GM12878 (cell line): ENCODE measurements at regions of chr18 and their contacts with region 1.

Region 1: DNA sequence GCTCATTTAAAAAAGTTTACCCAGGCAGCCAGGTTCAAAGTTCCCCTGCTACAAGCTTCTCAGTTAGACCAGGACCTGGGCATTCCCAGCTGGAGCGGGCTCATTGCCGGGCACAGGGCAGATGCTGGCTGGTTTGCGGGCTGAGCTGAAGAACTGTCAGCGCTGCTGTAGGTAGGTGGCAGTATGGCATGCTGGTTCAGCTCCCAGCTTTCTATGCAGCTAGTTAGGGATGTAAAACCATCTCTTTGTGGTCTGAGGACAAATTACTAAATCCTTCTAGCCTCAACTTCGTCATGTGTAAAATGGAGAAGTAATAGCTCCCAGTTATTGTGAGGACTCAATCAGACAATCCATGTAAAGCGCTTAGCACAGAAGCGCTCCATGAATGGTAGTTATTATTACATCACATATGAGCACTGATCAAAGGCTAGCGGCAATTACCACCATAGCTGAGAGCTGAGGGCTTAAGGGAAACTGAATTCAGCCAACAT is 2.4 kb upstream of the LDLRAD4 start:
- DNase-seq: peak; percentile 4
- ATAC-seq: peak; percentile 79
- H3K4me3 ChIP-seq: no peak overlapping the region
- H3K27ac ChIP-seq: no peak overlapping the region
- H3K4me1 ChIP-seq: no peaks in the 10 kb centered on the region
- H3K27me3 ChIP-seq: peaks cover 8 to 25% of the 10 kb centered on the region in 2 experiments
- CTCF ChIP-seq: peak; percentile 49 to 70 (median 57)
- EP300 ChIP-seq: no peak
- POLR2A ChIP-seq: no peak
- RAD21 ChIP-seq: peak; percentile 55

Region 2: GRCh38 chr18:13103366-13103765 is 112.8 kb before region 1 on chr18:
- CTCF ChIA-PET with region 1: no interaction called
- POLR2A ChIA-PET with region 1: no interaction called
- RAD21 ChIA-PET with region 1: no interaction called
- SMC1A ChIA-PET with region 1: no interaction called
- in situ Hi-C with region 1: no loop called
- intact Hi-C with region 1: no loop called
- DNase-seq: no peak
- ATAC-seq: no peak
- H3K4me3 ChIP-seq: no peak overlapping the region
- H3K27ac ChIP-seq: no peak overlapping the region
- H3K4me1 ChIP-seq: no peaks in the 10 kb centered on the region
- H3K27me3 ChIP-seq: no peaks in the 10 kb centered on the region
- CTCF ChIP-seq: peak; percentile 12 to 29 (median 20); a peak in 3 of 6 replicates
- EP300 ChIP-seq: no peak
- POLR2A ChIP-seq: no peak
- RAD21 ChIP-seq: no peak

Region 3: DNA sequence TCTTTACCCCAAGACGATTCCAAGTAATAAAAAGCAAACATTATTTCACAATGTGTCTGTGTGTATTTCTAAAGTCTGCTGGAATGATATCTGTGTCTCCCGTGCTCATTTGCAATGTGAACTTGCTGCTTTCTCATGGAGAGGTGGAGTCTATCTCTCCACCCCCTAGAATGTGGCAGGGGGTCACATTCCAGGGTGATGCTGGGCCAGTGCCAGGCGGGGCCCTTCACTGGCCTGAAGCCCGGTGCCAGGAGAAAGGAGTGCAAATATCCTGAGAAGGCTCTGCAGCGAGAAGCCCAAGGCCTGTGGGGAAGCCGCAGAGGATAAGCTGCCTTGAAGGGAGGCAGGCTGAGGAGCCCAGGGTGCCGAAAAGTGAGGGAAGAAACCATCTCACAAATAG is 24.4 kb before region 1 on chr18:
- CTCF ChIA-PET with region 1: no interaction called
- POLR2A ChIA-PET with region 1: no interaction called
- RAD21 ChIA-PET with region 1: no interaction called
- SMC1A ChIA-PET with region 1: no interaction called
- in situ Hi-C with region 1: no loop called
- intact Hi-C with region 1: no loop called
- DNase-seq: no peak
- ATAC-seq: no peak
- H3K4me3 ChIP-seq: no peak overlapping the region
- H3K27ac ChIP-seq: no peak overlapping the region
- H3K4me1 ChIP-seq: no peaks in the 10 kb centered on the region
- H3K27me3 ChIP-seq: no peaks in the 10 kb centered on the region; a peak in 2 of 4 replicates
- CTCF ChIP-seq: no peak
- EP300 ChIP-seq: no peak
- POLR2A ChIP-seq: no peak
- RAD21 ChIP-seq: no peak

Region 4: GRCh38 chr18:13500869-13501542 is 284.9 kb after region 1 on chr18:
- CTCF ChIA-PET with region 1: interaction called, 9 read pairs
- POLR2A ChIA-PET with region 1: no interaction called
- RAD21 ChIA-PET with region 1: interaction called, 13 read pairs
- SMC1A ChIA-PET with region 1: interaction called, 10 read pairs
- in situ Hi-C with region 1: no loop called
- intact Hi-C with region 1: no loop called
- DNase-seq: no peak
- ATAC-seq: no peak
- H3K4me3 ChIP-seq: no peak overlapping the region
- H3K27ac ChIP-seq: no peak overlapping the region
- H3K4me1 ChIP-seq: peaks cover 12% of the 10 kb centered on the region
- H3K27me3 ChIP-seq: peaks cover 0 to 4% of the 10 kb centered on the region in 2 experiments; a peak in 2 of 4 replicates
- CTCF ChIP-seq: no peak
- EP300 ChIP-seq: no peak
- POLR2A ChIP-seq: no peak
- RAD21 ChIP-seq: no peak

Region 5: GRCh38 chr18:13530879-13531387 is 314.8 kb after region 1 on chr18:
- CTCF ChIA-PET with region 1: interaction called, 26 read pairs
- POLR2A ChIA-PET with region 1: no interaction called
- RAD21 ChIA-PET with region 1: interaction called, 11 read pairs
- SMC1A ChIA-PET with region 1: interaction called, 15 read pairs
- in situ Hi-C with region 1: no loop called
- intact Hi-C with region 1: loop called (anchors 10 kb)
- DNase-seq: no peak
- ATAC-seq: peak; percentile 77
- H3K4me3 ChIP-seq: no peak overlapping the region
- H3K27ac ChIP-seq: no peak overlapping the region
- H3K4me1 ChIP-seq: no peaks in the 10 kb centered on the region
- H3K27me3 ChIP-seq: peaks cover 0 to 3% of the 10 kb centered on the region in 2 experiments; a peak in 2 of 4 replicates
- CTCF ChIP-seq: peak; percentile 33 to 52 (median 43); a peak in 5 of 6 replicates
- EP300 ChIP-seq: no peak
- POLR2A ChIP-seq: no peak
- RAD21 ChIP-seq: peak; percentile 52

Region 6: GRCh38 chr18:13823707-13824395 is 607.7 kb after region 1 on chr18 and contains the start of gene MC5R:
- CTCF ChIA-PET with region 1: no interaction called
- POLR2A ChIA-PET with region 1: no interaction called
- RAD21 ChIA-PET with region 1: no interaction called
- SMC1A ChIA-PET with region 1: no interaction called
- in situ Hi-C with region 1: no loop called
- intact Hi-C with region 1: no loop called
- DNase-seq: no peak
- ATAC-seq: peak; percentile 98
- H3K4me3 ChIP-seq: no peak within 1 kb of the TSS; the same call in 1 of the 2 replicates
- H3K27ac ChIP-seq: no peak within 1 kb of the TSS
- H3K4me1 ChIP-seq: no peaks in the 10 kb centered on the region
- H3K27me3 ChIP-seq: no peaks in the 10 kb centered on the region
- CTCF ChIP-seq: peak; percentile 90 to 96 (median 94)
- EP300 ChIP-seq: no peak
- POLR2A ChIP-seq: no peak
- RAD21 ChIP-seq: peak; percentile 83
- polyA plus RNA-seq, gene MC5R: not detected